ENCODE measurements at regions of chr22 and their contacts with region 1.

Region 1: GRCh38 chr22:42906605-42907348 is 49.7 kb upstream of the ARFGAP3 start:
- DNase-seq: no peak
- H3K4me3 ChIP-seq: no peak overlapping the region
- H3K27ac ChIP-seq: no peak overlapping the region
- H3K4me1 ChIP-seq: peaks cover 30% of the 10 kb centered on the region
- H3K27me3 ChIP-seq: no peaks in the 10 kb centered on the region
- CTCF ChIP-seq: no peak

Region 2: DNA sequence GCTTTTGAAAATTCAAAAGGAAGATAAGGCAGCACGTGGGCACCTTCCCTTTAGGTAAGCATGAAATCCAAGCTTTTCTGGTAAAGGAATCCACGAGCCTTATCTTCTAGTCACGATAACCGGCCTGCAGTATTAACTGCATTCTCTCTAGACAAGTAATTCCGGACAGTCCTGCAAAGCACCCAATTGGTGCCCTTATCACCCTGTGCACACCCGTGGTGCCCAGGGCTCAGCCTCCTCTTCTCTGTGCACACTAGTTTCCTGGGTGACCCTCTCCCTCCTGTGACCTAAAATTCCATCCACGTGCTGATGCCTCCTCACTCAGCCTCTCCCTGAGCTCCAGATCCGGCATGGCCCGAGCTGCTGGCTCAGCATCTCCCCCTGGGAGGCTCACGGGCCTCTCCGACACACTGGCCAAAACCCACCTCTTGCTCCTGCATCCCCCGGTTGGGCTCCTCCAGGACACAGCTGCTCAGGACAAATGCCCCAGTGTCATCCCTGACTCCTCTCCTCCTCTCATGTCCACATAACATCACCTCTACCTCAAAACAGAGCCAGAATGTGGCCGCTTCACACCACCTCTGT is 44.4 kb after region 1 on chr22:
- CTCF ChIA-PET with region 1: interaction called, 4 read pairs
- dilution Hi-C with region 1: loop called (anchors 5 kb)
- in situ Hi-C with region 1: no loop called
- intact Hi-C with region 1: loop called (anchors 5 kb)
- DNase-seq: no peak
- H3K4me3 ChIP-seq: no peak overlapping the region
- H3K27ac ChIP-seq: no peak overlapping the region
- H3K4me1 ChIP-seq: peaks cover 42% of the 10 kb centered on the region
- H3K27me3 ChIP-seq: no peaks in the 10 kb centered on the region
- CTCF ChIP-seq: no peak